GM18951 (cell line): ENCODE measurements at regions of chr2 and their contacts with region 1.

Region 1: GRCh38 chr2:30711646-30712085 is 95.6 kb downstream of the CAPN13 start:
- POLR2A ChIP-seq: no peak

Region 2: DNA sequence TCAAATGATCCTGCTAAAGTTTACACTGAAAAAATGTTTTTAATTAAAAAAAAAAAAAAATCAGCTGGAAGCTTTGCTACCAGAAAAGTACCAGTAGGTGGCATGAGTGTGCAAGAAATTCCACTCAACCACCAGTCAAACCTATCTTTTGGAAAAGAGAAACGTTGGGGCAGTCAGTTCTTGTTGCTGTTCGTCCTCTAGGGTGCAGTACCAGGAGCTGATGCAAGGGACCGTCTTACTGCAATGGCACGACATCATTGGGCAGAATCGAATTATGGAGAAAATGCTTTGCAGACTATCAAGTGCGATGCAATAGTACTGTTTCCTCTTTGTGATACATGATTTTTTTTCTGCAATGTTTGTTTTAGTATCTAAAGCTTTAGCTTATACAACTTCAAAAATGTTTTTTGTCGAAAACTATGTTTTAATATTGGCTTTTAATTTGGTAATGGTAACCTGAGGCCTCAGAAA is 546.6 kb before region 1 on chr2:
- in situ Hi-C with region 1: loop called (anchors 10 kb)
- POLR2A ChIP-seq: no peak

Region 3: GRCh38 chr2:30208452-30208851 is 503.2 kb before region 1 on chr2:
- in situ Hi-C with region 1: loop called (anchors 10 kb)
- POLR2A ChIP-seq: no peak

Region 4: DNA sequence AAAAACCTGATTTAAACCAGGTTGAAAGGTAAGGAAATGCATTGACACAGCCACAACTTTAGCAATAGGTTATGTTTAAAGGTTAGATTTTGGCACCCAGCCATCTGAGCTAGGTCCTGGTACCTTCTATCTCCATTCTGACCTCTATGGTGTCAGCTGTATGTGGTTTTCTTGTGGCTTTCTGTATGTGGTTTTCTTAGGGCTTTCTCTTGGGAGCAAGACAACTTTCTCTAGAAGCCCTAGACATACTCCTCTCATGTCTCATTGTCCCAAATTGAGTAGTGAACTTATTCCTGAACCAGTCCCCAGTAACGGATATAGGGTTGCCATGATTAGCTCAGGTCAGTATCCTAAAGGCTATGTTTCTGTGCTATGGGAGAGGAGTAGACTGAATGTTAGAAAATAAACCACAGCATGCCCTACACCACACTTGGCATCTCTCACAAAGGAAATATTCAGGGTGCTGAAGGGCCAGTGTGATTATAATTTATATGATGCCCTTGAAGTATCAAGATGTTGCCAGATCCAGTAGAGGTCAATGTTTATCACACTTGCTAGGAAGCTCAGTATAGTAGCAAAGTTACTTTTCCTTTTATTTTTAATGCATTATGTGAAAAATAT is 80.5 kb before region 1 on chr2:
- in situ Hi-C with region 1: no loop called
- POLR2A ChIP-seq: no peak

Region 5: DNA sequence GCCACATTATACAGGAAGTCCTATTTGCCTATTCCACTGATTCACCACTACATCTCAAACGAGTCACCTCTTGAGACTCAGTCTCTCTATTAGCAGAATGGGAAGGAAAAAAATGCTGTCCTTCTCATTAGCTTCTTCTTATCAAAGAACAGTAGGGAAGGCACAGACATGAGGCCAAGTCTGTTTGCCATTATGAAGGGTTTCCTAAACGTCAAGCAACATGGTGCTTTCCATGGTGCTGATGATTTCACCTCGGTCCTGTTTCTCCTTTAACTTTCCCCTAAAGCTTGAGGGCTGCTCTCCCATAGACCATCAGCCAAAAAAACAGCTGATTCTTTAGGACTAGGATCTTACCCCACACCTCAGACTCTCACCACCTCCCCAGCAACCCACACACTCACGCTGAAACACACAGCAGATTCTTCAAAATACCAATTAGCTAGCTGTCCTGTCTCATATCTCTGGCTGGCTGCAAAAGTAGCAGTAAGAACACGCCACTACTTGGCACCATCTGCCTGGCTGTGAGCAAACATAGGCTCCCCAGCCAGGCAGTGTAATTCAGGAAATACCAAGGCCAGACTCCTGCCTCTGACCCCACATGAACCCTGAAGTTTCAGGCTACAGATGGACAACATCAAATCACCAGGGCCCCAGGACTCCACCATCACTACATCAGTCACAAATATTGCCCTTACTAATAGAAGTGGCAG is 396.1 kb after region 1 on chr2:
- in situ Hi-C with region 1: no loop called
- POLR2A ChIP-seq: no peak

Region 6: GRCh38 chr2:31170071-31170698 is 458.5 kb after region 1 on chr2:
- in situ Hi-C with region 1: loop called (anchors 25 kb)
- POLR2A ChIP-seq: no peak

Region 7: GRCh38 chr2:31333527-31334183 is 622.0 kb after region 1 on chr2:
- in situ Hi-C with region 1: loop called (anchors 10 kb)
- POLR2A ChIP-seq: no peak

Region 8: DNA sequence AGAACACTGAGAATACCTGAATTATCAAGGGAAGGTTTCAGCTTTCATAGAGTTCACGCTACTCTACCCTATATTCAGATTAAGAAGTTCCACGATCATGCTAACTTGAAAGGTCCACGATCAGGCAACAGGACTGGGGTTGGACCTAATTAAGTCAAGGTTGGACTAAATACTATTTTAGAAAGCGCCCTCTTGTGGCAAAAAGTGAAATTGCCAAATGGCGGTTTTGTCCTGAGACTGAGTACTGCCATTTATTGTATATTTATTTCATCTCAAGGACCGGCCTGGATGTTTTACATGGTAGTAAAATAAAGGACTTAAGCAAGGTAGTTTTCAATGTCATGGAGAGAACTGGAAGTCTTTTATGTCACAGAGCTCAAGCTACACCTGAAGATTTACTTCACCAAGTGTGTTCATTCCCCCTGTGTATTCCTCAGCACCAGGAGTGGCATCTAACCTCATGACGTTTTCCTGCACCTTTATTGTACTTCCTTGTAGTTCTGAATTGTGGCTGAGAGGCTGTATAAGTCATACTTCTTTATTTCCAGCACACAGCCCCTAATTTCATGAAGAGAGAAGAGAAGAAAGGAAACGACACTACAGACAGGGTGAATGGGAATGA is 812.3 kb after region 1 on chr2:
- in situ Hi-C with region 1: loop called (anchors 10 kb)
- POLR2A ChIP-seq: no peak